Heart right ventricle (tissue), 16 donors: ENCODE measurements at regions of chr3 and their contacts with region 1.

Region 1: GRCh38 chr3:40961104-40961857 is 238.0 kb upstream of the CTNNB1 start:
- DNase-seq: no peak
- ATAC-seq: no peak
- H3K4me3 ChIP-seq: no peak overlapping the region
- H3K27ac ChIP-seq: no peak overlapping the region
- H3K4me1 ChIP-seq: peaks cover 0 to 11% (median 0%) of the 10 kb centered on the region in 9 donors
- H3K27me3 ChIP-seq: no peaks in the 10 kb centered on the region
- CTCF ChIP-seq: no peak

Region 2: GRCh38 chr3:40847551-40847992 is 113.7 kb before region 1 on chr3:
- intact Hi-C with region 1: loop called in 1 of 10 experiments (anchors 10 kb)
- DNase-seq: peak in 1 of 2 donors; percentile 38
- ATAC-seq: peak; percentile 74 to 93 (median 89)
- H3K4me3 ChIP-seq: no peak overlapping the region
- H3K27ac ChIP-seq: no peak overlapping the region
- H3K4me1 ChIP-seq: peaks cover 0 to 28% (median 10%) of the 10 kb centered on the region in 9 donors
- H3K27me3 ChIP-seq: no peaks in the 10 kb centered on the region
- CTCF ChIP-seq: peak in 7 of 9 donors; percentile 27 to 64 (median 36)